ENCODE measurements at regions of chr16 and their contacts with region 1.

Region 1: GRCh38 chr16:53309457-53309856 is 124.8 kb upstream of the RBL2 start:
- DNase-seq: no peak
- ATAC-seq: no peak
- H3K4me3 ChIP-seq: no peak overlapping the region
- H3K27ac ChIP-seq: no peak overlapping the region
- H3K4me1 ChIP-seq: no peaks in the 10 kb centered on the region
- H3K27me3 ChIP-seq: no peaks in the 10 kb centered on the region
- CTCF ChIP-seq: no peak
- POLR2A ChIP-seq: no peak

Region 2: GRCh38 chr16:53257001-53257400 is 52.5 kb before region 1 on chr16:
- intact Hi-C with region 1: loop called in 1 of 10 experiments (anchors 10 kb)
- DNase-seq: no peak
- ATAC-seq: no peak
- H3K4me3 ChIP-seq: no peak overlapping the region
- H3K27ac ChIP-seq: no peak overlapping the region
- H3K4me1 ChIP-seq: no peaks in the 10 kb centered on the region
- H3K27me3 ChIP-seq: no peaks in the 10 kb centered on the region
- CTCF ChIP-seq: no peak
- POLR2A ChIP-seq: no peak

Region 3: GRCh38 chr16:53266156-53266555 is 43.3 kb before region 1 on chr16:
- intact Hi-C with region 1: loop called in 1 of 10 experiments (anchors 5 kb)
- DNase-seq: no peak
- ATAC-seq: no peak
- H3K4me3 ChIP-seq: no peak overlapping the region
- H3K27ac ChIP-seq: no peak overlapping the region
- H3K4me1 ChIP-seq: no peaks in the 10 kb centered on the region
- H3K27me3 ChIP-seq: no peaks in the 10 kb centered on the region
- CTCF ChIP-seq: no peak
- POLR2A ChIP-seq: no peak